ENCODE measurements at regions of chr11 and their contacts with region 1.

Region 1: DNA sequence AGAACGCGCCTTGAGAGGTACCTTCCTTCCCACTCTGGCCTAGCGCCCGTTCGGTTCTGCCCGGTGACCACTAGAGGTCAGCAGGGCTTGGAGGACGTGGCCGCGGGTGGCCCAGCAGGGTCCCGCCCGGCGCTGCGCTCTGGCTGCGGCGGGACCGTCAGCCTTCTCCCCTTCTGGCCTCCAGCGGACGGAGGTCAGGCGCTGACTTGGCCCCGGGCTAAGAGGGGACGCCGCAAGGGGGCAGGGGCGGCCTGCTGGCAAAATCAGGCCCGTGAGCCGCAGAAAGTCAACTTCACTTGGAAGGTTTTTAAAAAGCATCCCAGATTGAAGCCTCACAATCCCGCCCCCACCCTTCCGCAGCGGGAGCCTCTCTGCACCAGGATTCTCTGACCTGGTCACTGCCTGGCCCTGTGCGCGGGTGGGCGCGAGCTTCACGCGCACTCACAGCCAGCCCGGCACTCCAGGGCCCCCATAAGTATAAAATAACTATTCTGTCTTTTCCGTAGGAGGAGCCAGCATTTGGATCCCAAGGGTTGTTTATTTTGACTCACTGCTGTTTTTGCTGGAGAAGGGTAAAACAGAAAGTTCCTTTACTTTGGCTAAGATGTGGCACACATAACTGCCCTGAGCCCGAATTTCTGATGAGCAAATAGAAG is 23.2 kb upstream of the ZBTB16 start:
- DNase-seq: peak; percentile 22 to 74 (median 49)
- ATAC-seq: peak; percentile 56
- H3K4me3 ChIP-seq: peak overlapping the region; percentile 19
- H3K4me3 Mint-ChIP-seq: no peak overlapping the region
- H3K27ac ChIP-seq: no peak overlapping the region
- H3K27ac Mint-ChIP-seq: no peak overlapping the region
- H3K4me1 ChIP-seq: peaks cover 10% of the 10 kb centered on the region
- H3K4me1 Mint-ChIP-seq: no peaks in the 10 kb centered on the region
- H3K27me3 ChIP-seq: peaks cover 0 to 3% of the 10 kb centered on the region in 2 experiments
- H3K27me3 Mint-ChIP-seq: no peaks in the 10 kb centered on the region
- CTCF ChIP-seq: peak; percentile 74

Region 2: DNA sequence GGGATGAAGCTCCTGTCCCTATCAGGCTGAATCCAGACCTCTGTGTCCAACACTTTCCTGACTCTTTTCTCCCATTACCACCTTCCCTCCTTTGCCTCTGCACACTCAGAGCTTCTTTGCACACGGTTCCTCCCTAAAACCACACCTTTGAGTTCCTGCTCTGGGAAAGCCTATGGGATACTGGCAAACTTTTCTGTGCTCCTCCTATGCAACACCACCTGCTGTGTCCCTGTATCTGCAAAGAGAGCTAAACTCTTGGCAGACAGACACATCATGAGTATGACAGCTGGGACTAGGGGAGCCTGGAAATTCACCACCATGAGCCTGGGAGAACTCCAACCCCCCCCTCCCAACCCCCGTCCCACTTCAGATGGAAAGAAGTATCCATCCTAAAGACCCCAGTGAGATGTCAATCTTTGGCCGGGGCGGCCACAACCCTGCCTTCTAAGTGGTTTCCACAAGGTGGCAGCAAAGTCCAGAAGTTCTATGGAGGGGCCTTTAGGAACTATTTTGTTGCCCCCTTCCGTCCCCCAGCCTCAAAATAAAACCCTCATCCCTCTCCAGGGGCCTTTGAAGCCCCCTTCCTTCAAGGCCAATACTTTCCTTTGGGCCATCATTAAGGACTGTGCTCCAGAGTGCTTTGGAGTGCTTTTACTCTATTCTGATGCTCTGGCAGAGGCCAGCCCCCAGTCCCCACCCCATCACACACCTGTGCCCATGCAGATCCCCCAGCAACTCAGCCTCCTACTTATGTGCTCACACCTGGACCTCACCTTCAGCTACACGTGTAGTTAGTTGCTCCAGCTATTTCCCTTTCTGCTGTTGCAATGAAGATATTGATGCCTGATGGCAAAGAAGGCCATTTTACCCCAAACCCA is 42.0 kb before region 1 on chr11:
- CTCF ChIA-PET with region 1: no interaction called
- POLR2A ChIA-PET with region 1: no interaction called
- intact Hi-C with region 1: loop called in 1 of 2 experiments (anchors 2 kb)
- DNase-seq: peak; percentile 8 to 61 (median 28)
- ATAC-seq: no peak
- H3K4me3 ChIP-seq: no peak overlapping the region
- H3K4me3 Mint-ChIP-seq: no peak overlapping the region
- H3K27ac ChIP-seq: no peak overlapping the region
- H3K27ac Mint-ChIP-seq: no peak overlapping the region
- H3K4me1 ChIP-seq: peaks cover 8% of the 10 kb centered on the region
- H3K4me1 Mint-ChIP-seq: no peaks in the 10 kb centered on the region
- H3K27me3 ChIP-seq: peaks cover 8 to 11% of the 10 kb centered on the region in 2 experiments
- H3K27me3 Mint-ChIP-seq: peaks cover 35% of the 10 kb centered on the region
- CTCF ChIP-seq: peak; percentile 77

Measured in CD4-positive, alpha-beta T cell (primary cell).